HepG2 (cell line): ENCODE measurements at regions of chr1 and their contacts with region 1.

Region 1: DNA sequence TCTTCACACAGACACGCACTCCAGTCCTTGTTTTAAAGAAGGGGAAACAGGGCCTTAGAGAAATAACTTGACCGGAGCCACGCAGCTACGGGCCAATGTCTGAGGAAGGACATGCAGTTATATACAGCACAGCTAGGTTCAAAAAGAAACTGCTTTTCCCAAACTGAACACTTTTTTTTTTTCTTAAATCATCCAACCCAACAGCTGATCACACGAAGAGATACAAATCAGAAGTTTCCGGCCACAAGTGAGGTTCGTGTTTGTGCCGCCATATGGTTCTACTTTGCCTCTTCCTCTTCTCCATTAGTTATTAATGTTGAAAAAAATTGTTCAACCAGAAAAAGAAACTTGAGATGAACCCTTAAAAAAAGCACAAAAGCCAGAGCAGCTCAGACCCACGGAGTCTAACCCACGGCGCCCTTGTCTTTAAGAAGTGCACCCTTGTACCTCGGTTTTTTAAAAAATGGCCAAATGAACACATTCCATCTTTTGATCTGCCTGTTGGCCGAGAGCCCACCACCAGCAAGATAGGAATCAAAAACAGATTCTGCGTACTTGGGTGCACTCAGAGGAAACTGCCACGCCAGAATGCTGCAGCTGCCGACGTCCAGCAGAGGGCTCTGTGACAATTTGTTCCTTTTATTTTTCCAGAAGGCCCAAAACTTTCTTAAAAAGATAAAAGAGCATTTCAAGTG is 78.9 kb downstream of the SLC66A1 start:
- DNase-seq: no peak
- ATAC-seq: no peak
- H3K4me3 ChIP-seq: no peak overlapping the region
- H3K27ac ChIP-seq: no peak overlapping the region
- H3K4me1 ChIP-seq: peaks cover 58% of the 10 kb centered on the region
- H3K27me3 ChIP-seq: no peaks in the 10 kb centered on the region
- CTCF ChIP-seq: peak; percentile 69
- EP300 ChIP-seq: no peak
- POLR2A ChIP-seq: no peak
- RAD21 ChIP-seq: peak; percentile 64

Region 2: GRCh38 chr1:19436716-19437476 is 45.8 kb after region 1 on chr1:
- CTCF ChIA-PET with region 1: no interaction called
- POLR2A ChIA-PET with region 1: no interaction called
- in situ Hi-C with region 1: no loop called
- intact Hi-C with region 1: loop called (anchors 1 kb)
- DNase-seq: peak; percentile 95
- ATAC-seq: peak; percentile 98
- H3K4me3 ChIP-seq: peak overlapping the region in 1 of 3 experiments; percentile 12; a peak in 1 of 6 replicates
- H3K27ac ChIP-seq: peak overlapping the region; percentile 59
- H3K4me1 ChIP-seq: peaks cover 93% of the 10 kb centered on the region
- H3K27me3 ChIP-seq: no peaks in the 10 kb centered on the region
- CTCF ChIP-seq: no peak
- EP300 ChIP-seq: peak in 1 of 2 experiments; percentile 83; a peak in 2 of 4 replicates
- POLR2A ChIP-seq: no peak
- RAD21 ChIP-seq: no peak

Region 3: DNA sequence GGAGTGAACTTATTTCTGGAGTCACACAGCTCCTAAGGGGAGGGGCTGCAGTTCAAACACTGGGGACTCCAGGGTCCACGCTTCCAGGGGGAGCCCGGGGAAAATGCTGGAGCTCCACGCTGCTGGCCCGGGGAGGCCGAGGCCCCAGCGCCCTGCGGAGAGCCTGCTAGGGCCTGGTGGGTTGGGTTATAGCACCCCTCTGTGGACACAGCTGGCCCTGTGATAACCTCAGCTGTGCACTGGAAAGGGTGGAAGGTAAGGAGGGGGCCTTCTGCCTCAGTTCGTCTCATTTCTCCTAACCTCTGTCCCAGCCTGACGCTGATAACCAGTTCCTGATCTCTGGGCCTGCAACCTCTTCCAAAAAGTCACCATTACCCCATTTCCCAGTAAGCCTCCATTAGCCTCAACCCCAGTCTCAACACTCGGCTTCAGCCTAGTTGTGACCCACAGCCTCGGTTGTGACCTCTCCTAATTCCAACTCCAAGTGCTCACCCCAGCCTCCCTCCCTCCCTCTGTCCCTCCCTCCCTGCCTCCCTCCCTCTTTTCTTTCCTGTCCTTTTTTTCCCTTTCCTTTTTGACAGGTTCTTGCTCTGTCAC is 260.2 kb after region 1 on chr1:
- CTCF ChIA-PET with region 1: interaction called, 12 read pairs
- POLR2A ChIA-PET with region 1: no interaction called
- in situ Hi-C with region 1: no loop called
- intact Hi-C with region 1: loop called (anchors 2 kb)
- DNase-seq: peak; percentile 24
- ATAC-seq: peak; percentile 90
- H3K4me3 ChIP-seq: peak overlapping the region in 1 of 3 experiments; percentile 39; a peak in 1 of 6 replicates
- H3K27ac ChIP-seq: no peak overlapping the region
- H3K4me1 ChIP-seq: peaks cover 29% of the 10 kb centered on the region
- H3K27me3 ChIP-seq: no peaks in the 10 kb centered on the region
- CTCF ChIP-seq: peak; percentile 96
- EP300 ChIP-seq: no peak
- POLR2A ChIP-seq: no peak
- RAD21 ChIP-seq: peak; percentile 95